ENCODE measurements at regions of chr14 and their contacts with region 1.

Region 1: DNA sequence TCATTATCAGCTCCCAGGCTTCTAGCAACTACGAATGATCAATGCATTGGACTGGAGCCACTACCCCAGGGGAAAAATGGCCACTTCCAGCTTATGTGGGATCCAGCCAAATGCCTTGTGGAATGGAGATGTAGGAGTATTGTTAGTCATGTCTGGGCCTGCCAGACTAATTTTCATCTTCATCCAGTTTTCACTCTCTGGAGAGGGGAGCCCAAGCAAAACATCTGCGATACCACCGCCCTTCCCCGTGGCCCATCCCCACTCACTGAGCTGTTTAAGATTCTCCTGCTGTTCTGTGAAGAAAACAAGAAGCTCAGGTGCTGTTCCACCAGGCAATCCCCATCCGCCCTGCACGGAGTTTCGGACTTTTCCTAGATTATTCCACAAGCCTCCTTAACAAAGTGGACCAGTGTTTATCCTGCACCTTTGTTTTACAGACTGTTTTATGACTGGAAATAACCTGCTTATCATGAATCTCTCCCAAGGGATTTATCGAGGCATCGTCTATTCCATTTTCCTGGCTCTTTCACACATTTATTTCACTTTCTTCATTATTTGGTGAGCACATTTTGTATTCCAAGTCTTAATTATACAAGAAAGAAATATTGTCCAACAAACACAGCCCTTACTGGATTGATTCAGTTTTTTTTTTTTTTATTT is 35.5 kb upstream of the MAX start:
- DNase-seq: no peak
- H3K4me3 ChIP-seq: no peak overlapping the region
- H3K27ac ChIP-seq: no peak overlapping the region
- H3K4me1 ChIP-seq: no peaks in the 10 kb centered on the region
- CTCF ChIP-seq: no peak

Region 2: DNA sequence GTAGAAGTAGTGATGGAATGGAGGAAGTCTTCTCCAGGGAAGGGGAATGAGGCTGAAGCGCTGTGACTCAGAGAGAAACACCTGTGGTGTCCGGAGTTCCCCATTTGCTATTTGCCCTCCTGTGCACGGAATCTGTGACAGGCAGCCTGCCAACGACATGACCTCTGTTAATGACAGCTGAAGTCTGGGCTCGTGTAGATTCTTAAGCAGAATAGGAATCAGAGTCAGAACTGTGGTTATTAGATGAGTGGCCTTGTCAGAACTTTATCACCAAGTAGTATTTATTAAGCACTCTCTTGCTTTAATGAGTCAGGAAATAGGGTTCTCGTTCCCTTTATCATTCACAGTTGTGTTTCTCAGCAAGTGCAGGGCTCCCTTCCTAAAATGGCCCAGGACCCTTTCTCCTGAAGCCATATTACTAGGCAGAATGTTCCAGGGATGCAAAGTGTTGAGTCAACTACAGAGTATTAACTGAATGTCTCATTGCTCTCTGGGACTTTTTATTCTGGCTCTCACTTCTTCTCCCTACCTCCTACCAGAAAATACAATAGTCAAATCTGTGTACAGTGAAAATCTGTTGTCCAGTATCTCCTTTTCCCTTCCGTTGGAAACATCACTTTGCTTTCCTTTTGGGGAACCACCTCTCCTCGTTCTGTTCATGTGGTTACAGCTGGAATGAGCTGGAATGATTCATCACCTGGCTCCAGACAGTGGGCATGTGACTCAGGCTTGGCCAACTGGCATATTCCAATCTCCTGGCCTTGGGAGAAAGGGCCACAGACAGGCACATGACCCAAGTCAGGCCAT is 42.3 kb after region 1 on chr14:
- CTCF ChIA-PET with region 1: no interaction called
- POLR2A ChIA-PET with region 1: no interaction called
- intact Hi-C with region 1: no loop called
- DNase-seq: peak; percentile 52
- H3K4me3 ChIP-seq: no peak overlapping the region
- H3K27ac ChIP-seq: no peak overlapping the region
- H3K4me1 ChIP-seq: peaks cover 13% of the 10 kb centered on the region
- CTCF ChIP-seq: no peak

Region 3: GRCh38 chr14:65190312-65190711 is 52.5 kb after region 1 on chr14:
- CTCF ChIA-PET with region 1: no interaction called
- POLR2A ChIA-PET with region 1: no interaction called
- intact Hi-C with region 1: no loop called
- DNase-seq: no peak
- H3K4me3 ChIP-seq: no peak overlapping the region
- H3K27ac ChIP-seq: no peak overlapping the region
- H3K4me1 ChIP-seq: peaks cover 38% of the 10 kb centered on the region
- CTCF ChIP-seq: no peak

Region 4: DNA sequence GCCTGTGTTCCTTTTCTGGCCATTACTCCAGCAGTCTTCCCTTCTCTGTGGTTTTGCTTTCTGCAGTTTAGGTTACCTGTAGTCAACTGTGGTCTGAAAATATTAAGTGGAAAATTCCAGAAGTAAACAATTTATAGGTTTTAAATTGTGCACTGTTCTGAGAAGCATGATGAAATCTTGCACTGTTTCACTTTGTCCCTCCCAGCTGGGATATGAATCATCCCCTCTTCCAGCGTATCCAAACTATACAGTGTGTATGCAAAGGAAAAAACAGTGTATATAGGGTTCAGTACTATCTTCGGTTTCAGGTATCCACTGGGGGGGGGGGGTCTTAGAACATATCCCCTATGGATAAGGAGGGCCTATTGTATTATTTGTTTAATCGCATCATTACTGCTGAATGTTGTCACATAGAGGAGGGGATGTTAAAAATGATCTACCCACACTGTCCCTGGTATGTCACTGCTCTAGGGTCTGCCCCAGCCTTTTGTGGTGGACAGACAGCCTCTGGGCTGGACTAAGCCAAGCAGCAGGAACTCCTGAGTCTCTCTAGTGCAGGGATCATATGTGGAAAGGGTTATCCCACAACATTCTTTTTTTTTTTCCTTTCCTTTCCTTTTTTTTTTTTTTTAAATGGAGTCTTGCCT is 73.7 kb after region 1 on chr14:
- CTCF ChIA-PET with region 1: no interaction called
- POLR2A ChIA-PET with region 1: no interaction called
- intact Hi-C with region 1: no loop called
- DNase-seq: no peak
- H3K4me3 ChIP-seq: peak overlapping the region; percentile 54
- H3K27ac ChIP-seq: peak overlapping the region; percentile 97
- H3K4me1 ChIP-seq: peaks cover 60% of the 10 kb centered on the region
- CTCF ChIP-seq: no peak

Region 5: DNA sequence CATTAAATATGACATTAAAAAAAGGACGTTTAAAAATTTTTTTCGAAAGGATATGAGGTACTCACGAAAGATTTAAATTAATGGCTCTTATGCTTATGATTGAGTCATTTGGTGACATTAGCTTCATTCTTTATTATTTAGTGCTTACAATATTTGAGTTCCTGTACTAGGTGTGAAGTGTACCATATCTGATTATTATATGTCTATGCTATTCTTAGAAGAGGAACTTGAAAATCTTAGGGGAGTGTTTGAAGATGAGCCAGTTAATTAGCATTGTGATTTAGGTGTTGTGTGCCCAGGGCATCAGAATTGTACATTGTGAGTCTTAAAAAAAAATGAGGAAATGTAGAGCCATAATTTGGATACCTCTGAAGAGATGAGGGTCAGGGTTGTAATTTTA is 393.4 kb after region 1 on chr14:
- CTCF ChIA-PET with region 1: no interaction called
- POLR2A ChIA-PET with region 1: interaction called, 10 read pairs
- intact Hi-C with region 1: no loop called
- DNase-seq: peak; percentile 10
- H3K4me3 ChIP-seq: no peak overlapping the region
- H3K27ac ChIP-seq: no peak overlapping the region
- H3K4me1 ChIP-seq: peaks cover 25% of the 10 kb centered on the region
- CTCF ChIP-seq: no peak

Measured in OCI-LY7 (cell line).